ENCODE measurements at regions of chr3 and their contacts with region 1.

Region 1: DNA sequence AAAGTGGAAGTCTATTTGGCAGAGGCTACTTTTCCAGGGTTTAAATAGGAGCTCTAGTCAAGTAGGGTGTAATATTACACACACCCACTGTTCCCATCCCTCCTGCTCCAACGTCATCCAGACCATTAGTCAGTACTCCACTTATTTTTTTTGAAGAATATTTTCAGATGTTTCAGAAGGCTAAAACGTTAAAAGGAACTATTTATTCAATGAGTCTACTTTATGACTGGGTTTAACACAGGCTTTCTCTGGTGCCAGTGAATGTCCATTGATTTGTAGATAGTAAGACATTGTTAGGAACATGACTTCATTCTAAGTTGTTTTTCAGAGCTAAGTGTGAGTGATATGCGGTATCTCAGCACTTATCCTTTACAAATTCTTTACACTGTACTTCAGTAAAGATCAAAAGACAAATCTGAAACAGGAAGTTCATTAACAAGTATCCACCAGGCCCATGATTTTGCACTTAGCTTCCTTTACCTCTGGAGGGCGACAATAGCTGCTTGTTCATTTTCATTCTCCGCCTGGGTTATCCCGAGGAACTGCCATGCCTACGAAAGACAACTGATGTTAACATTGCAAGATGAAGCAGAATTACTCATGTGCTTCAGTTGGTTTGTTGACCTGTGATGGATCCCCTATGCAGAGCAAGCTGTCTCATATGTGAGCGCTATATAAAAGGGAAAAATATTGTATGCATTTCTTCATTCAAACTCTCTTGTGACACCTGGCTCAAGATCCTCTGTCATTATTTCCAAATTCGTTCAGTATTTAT is 158.7 kb downstream of the USP13 start:
- DNase-seq: peak; percentile 77
- H3K4me3 ChIP-seq: no peak overlapping the region
- H3K27ac ChIP-seq: no peak overlapping the region
- H3K4me1 ChIP-seq: peaks cover 5% of the 10 kb centered on the region
- CTCF ChIP-seq: peak; percentile 94

Region 2: DNA sequence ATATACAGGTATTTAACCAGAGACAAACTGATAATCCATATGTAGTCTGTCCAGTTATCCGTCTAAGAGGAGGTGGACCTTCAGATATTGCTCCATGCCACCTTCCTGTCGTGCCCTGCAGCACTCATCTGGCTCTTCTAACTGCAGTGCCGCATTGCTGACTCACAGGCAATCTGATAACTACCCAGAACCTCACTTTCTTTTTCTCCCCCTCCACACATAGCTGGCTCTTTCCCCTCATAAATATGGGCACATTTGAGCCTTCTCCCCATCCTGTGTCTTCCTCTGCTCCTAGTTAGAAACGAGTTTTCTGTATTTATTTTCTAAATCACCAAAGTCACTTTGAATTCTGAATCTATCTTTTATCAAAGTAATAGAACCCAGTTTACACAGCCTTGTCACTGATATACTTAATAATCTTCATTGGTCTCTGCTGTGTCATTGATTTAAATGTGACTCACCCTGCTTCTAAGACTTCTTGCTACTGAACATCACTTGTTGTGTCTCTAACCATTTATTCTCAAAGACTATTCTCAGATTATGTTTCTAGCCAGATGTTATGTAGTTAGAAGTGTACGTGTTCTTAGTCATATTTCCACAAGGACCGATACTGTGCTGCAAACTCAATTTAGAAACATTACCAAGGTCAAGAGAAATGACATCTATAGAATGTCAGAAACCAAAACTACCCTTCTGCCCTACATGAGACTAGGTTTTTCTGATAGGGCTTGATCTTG is 1292.7 kb before region 1 on chr3:
- CTCF ChIA-PET with region 1: no interaction called
- POLR2A ChIA-PET with region 1: no interaction called
- intact Hi-C with region 1: no loop called
- DNase-seq: no peak
- H3K4me3 ChIP-seq: no peak overlapping the region
- H3K27ac ChIP-seq: no peak overlapping the region
- H3K4me1 ChIP-seq: no peaks in the 10 kb centered on the region
- CTCF ChIP-seq: no peak

Region 3: GRCh38 chr3:179921500-179921899 is 110.0 kb after region 1 on chr3:
- CTCF ChIA-PET with region 1: no interaction called
- POLR2A ChIA-PET with region 1: interaction called, 5 read pairs
- intact Hi-C with region 1: loop called (anchors 5 kb)
- DNase-seq: no peak
- H3K4me3 ChIP-seq: no peak overlapping the region
- H3K27ac ChIP-seq: no peak overlapping the region
- H3K4me1 ChIP-seq: peaks cover 7% of the 10 kb centered on the region
- CTCF ChIP-seq: no peak

Region 4: GRCh38 chr3:180085122-180085710 is 273.7 kb after region 1 on chr3:
- CTCF ChIA-PET with region 1: interaction called, 4 read pairs
- POLR2A ChIA-PET with region 1: interaction called, 5 read pairs
- intact Hi-C with region 1: loop called (anchors 1 kb)
- DNase-seq: peak; percentile 43
- H3K4me3 ChIP-seq: no peak overlapping the region
- H3K27ac ChIP-seq: no peak overlapping the region
- H3K4me1 ChIP-seq: no peaks in the 10 kb centered on the region
- CTCF ChIP-seq: peak; percentile 64